Tibial artery (tissue), 4 donors: ENCODE measurements at regions of chr5 and their contacts with region 1.

Region 1: GRCh38 chr5:43105369-43106289 is 15.1 kb upstream of the ZNF131 start:
- DNase-seq: peak; percentile 88 to 93
- H3K4me3 ChIP-seq: peak overlapping the region; percentile 39 to 50
- H3K27ac ChIP-seq: peak overlapping the region; percentile 36 to 50
- H3K4me1 ChIP-seq: peaks cover 0 to 9% (median 2%) of the 10 kb centered on the region in 4 donors
- H3K27me3 ChIP-seq: no peaks in the 10 kb centered on the region
- CTCF ChIP-seq: peak; percentile 98 to 99

Region 2: DNA sequence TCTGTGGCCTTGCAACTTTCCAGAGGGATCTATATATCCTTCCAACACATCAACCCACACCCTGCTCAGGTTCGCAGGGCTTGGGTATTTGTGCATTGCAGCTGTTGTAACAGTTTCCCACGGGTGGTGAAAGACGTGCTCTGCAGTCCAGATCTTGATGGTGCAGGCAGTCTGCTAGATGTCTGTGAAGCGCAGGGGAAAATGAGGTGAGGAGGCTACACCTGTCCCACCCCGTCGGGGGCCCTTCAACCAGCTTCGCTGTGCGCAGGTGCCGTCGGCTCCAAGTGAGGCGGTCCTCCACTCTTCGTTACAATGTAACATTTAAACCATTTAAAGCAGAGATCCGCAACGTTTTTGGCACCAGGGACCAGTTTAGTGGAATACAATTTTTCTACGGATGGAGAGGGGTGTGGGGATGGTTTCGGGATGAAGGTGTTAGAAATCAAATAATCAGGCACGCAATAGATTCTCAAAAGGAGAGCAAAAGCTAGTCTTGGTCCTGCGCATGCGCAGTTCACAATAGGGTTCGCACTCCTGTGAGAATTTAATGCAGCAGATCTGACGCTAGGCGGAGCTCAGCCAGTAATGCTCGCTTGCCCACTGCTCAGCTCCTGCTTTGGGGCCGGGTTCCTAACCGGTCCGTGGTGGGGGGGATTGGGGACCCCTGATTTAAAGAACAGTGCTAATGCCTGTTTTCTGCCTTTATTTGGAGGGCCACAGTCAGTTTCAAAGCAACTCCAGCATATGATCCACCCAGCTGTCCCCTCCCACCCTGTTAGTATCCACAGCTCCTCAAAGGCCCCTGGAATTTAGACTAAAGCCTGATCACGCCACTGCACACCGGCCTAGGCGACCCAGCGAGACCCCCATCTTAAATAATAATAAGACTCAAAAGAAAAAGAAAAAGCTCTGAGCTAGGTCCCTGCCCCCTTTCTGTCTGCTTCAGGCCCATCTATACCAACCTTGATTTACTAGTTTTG is 196.8 kb before region 1 on chr5:
- intact Hi-C with region 1: loop called (anchors 5 kb)
- DNase-seq: peak; percentile 86 to 90
- H3K4me3 ChIP-seq: peak overlapping the region; percentile 47 to 48
- H3K27ac ChIP-seq: peak overlapping the region in 1 of 2 donors; percentile 25
- H3K4me1 ChIP-seq: peaks cover 0 to 8% (median 2%) of the 10 kb centered on the region in 4 donors
- H3K27me3 ChIP-seq: peaks cover 0 to 2% of the 10 kb centered on the region in 2 donors
- CTCF ChIP-seq: peak; percentile 85 to 86

Region 3: GRCh38 chr5:43215073-43215631 is 109.5 kb after region 1 on chr5:
- intact Hi-C with region 1: no loop called
- DNase-seq: no peak
- H3K4me3 ChIP-seq: no peak overlapping the region
- H3K27ac ChIP-seq: no peak overlapping the region
- H3K4me1 ChIP-seq: no peaks in the 10 kb centered on the region
- H3K27me3 ChIP-seq: no peaks in the 10 kb centered on the region
- CTCF ChIP-seq: no peak

Region 4: GRCh38 chr5:43305948-43306565 is 200.4 kb after region 1 on chr5:
- intact Hi-C with region 1: loop called (anchors 5 kb)
- DNase-seq: no peak
- H3K4me3 ChIP-seq: no peak overlapping the region
- H3K27ac ChIP-seq: peak overlapping the region in 1 of 2 donors; percentile 29
- H3K4me1 ChIP-seq: peaks cover 0 to 38% (median 12%) of the 10 kb centered on the region in 4 donors
- H3K27me3 ChIP-seq: no peaks in the 10 kb centered on the region
- CTCF ChIP-seq: peak; percentile 54

Region 5: GRCh38 chr5:43389679-43390329 is 284.2 kb after region 1 on chr5:
- intact Hi-C with region 1: loop called (anchors 5 kb)
- DNase-seq: peak in 1 of 2 donors; percentile 58
- H3K4me3 ChIP-seq: no peak overlapping the region
- H3K27ac ChIP-seq: no peak overlapping the region
- H3K4me1 ChIP-seq: peaks cover 0 to 3% (median 0%) of the 10 kb centered on the region in 4 donors
- H3K27me3 ChIP-seq: no peaks in the 10 kb centered on the region
- CTCF ChIP-seq: peak; percentile 66 to 80